B cell (primary cell): ENCODE measurements at regions of chr11 and their contacts with region 1.

Region 1: GRCh38 chr11:61071208-61071681 is 31.0 kb upstream of the CD5 start:
- DNase-seq: peak; percentile 61
- ATAC-seq: peak; percentile 50
- H3K4me3 ChIP-seq: peak overlapping the region in 1 of 5 experiments; percentile 15
- H3K4me3 Mint-ChIP-seq: peak overlapping the region; percentile 68
- H3K27ac ChIP-seq: peak overlapping the region; percentile 91 to 98
- H3K27ac Mint-ChIP-seq: peak overlapping the region; percentile 97
- H3K4me1 ChIP-seq: peaks cover 40 to 49% of the 10 kb centered on the region in 2 donors
- H3K4me1 Mint-ChIP-seq: peaks cover 71% of the 10 kb centered on the region
- H3K27me3 ChIP-seq: no peaks in the 10 kb centered on the region
- H3K27me3 Mint-ChIP-seq: no peaks in the 10 kb centered on the region
- CTCF ChIP-seq: no peak

Region 2: DNA sequence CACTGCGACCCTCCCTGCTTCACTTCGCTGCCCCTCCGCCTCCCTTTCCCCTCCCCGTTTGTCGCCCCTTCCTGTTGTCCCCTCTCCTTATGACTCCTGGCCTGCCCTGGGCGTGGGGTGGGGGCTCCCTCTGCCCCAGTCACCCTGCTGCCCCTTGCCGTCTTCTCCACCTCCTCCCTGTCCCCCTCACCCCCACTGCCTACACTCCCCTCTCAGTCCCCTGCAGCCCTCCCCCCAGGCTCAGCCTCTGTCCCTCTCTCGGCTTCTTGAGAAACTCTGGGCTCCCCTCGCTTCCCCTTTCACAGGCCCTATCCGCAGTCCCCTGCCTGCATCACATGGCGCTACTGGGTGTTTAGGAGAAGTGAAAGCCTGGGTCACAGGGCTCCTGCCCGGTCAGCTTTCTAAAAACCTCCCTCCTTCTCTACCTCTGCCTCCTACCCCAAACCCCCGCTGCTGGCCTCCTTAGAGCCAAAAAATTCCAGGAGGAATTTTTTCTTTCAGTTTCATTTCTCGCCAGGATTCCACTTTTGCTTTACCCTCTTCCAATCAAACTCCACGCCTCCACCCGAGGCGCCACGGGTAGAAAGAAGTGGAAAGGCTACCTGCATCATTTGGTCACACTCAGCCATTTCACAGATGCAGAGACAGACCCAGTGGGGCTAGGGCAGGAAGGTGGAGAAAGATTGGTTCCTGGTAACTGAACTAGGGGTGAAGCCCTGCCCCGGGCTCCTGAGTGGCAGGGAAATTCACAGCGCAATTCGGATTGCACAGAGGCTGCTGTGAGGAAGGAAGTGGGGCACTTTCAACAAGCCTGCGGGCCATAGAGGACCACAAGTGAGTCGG is 119.1 kb before region 1 on chr11 and contains the start of gene SLC15A3:
- CTCF ChIA-PET with region 1: interaction called, 3 read pairs
- POLR2A ChIA-PET with region 1: no interaction called
- intact Hi-C with region 1: loop called (anchors 1 kb)
- DNase-seq: peak; percentile 91
- ATAC-seq: peak; percentile 88
- H3K4me3 ChIP-seq: peak within 1 kb of the TSS; percentile 53 to 99 (median 81)
- H3K4me3 Mint-ChIP-seq: peak within 1 kb of the TSS; percentile 90
- H3K27ac ChIP-seq: peak within 1 kb of the TSS; percentile 91 to 98
- H3K27ac Mint-ChIP-seq: peak within 1 kb of the TSS; percentile 94
- H3K4me1 ChIP-seq: peaks cover 48 to 62% of the 10 kb centered on the region in 2 donors
- H3K4me1 Mint-ChIP-seq: peaks cover 55% of the 10 kb centered on the region
- H3K27me3 ChIP-seq: no peaks in the 10 kb centered on the region
- H3K27me3 Mint-ChIP-seq: no peaks in the 10 kb centered on the region
- CTCF ChIP-seq: no peak
- total RNA-seq, gene SLC15A3: 91.4 and 93.0 TPM in 2 replicates

Region 3: GRCh38 chr11:61007591-61008478 is 63.4 kb before region 1 on chr11:
- CTCF ChIA-PET with region 1: no interaction called
- POLR2A ChIA-PET with region 1: no interaction called
- intact Hi-C with region 1: no loop called
- DNase-seq: peak; percentile 47
- ATAC-seq: peak; percentile 69
- H3K4me3 ChIP-seq: peak overlapping the region in 3 of 5 experiments; percentile 35 to 44 (median 38)
- H3K4me3 Mint-ChIP-seq: peak overlapping the region; percentile 84
- H3K27ac ChIP-seq: no peak overlapping the region
- H3K27ac Mint-ChIP-seq: peak overlapping the region; percentile 15
- H3K4me1 ChIP-seq: peaks cover 25 to 27% of the 10 kb centered on the region in 2 donors
- H3K4me1 Mint-ChIP-seq: peaks cover 37% of the 10 kb centered on the region
- H3K27me3 ChIP-seq: peaks cover 0 to 18% (median 6%) of the 10 kb centered on the region in 4 experiments
- H3K27me3 Mint-ChIP-seq: peaks cover 11% of the 10 kb centered on the region
- CTCF ChIP-seq: no peak

Region 4: GRCh38 chr11:61041755-61042518 is 29.3 kb before region 1 on chr11:
- CTCF ChIA-PET with region 1: interaction called, 9 read pairs
- POLR2A ChIA-PET with region 1: interaction called, 13 read pairs
- intact Hi-C with region 1: loop called (anchors 1 kb)
- DNase-seq: peak; percentile 63
- ATAC-seq: peak; percentile 91
- H3K4me3 ChIP-seq: peak overlapping the region in 4 of 5 experiments; percentile 13 to 49 (median 34)
- H3K4me3 Mint-ChIP-seq: peak overlapping the region; percentile 88
- H3K27ac ChIP-seq: peak overlapping the region; percentile 84 to 87
- H3K27ac Mint-ChIP-seq: peak overlapping the region; percentile 95
- H3K4me1 ChIP-seq: peaks cover 15 to 17% of the 10 kb centered on the region in 2 donors
- H3K4me1 Mint-ChIP-seq: peaks cover 29% of the 10 kb centered on the region
- H3K27me3 ChIP-seq: no peaks in the 10 kb centered on the region
- H3K27me3 Mint-ChIP-seq: no peaks in the 10 kb centered on the region
- CTCF ChIP-seq: no peak

Region 5: GRCh38 chr11:61052182-61052972 is 18.9 kb before region 1 on chr11:
- CTCF ChIA-PET with region 1: no interaction called
- POLR2A ChIA-PET with region 1: no interaction called
- intact Hi-C with region 1: no loop called
- DNase-seq: no peak
- ATAC-seq: no peak
- H3K4me3 ChIP-seq: no peak overlapping the region
- H3K4me3 Mint-ChIP-seq: no peak overlapping the region
- H3K27ac ChIP-seq: no peak overlapping the region
- H3K27ac Mint-ChIP-seq: no peak overlapping the region
- H3K4me1 ChIP-seq: no peaks in the 10 kb centered on the region
- H3K4me1 Mint-ChIP-seq: peaks cover 4% of the 10 kb centered on the region
- H3K27me3 ChIP-seq: no peaks in the 10 kb centered on the region
- H3K27me3 Mint-ChIP-seq: no peaks in the 10 kb centered on the region
- CTCF ChIP-seq: no peak

Region 6: GRCh38 chr11:61102667-61103571 is 31.7 kb after region 1 on chr11:
- CTCF ChIA-PET with region 1: no interaction called
- POLR2A ChIA-PET with region 1: interaction called, 7 read pairs
- intact Hi-C with region 1: loop called (anchors 2 kb)
- DNase-seq: no peak
- ATAC-seq: no peak
- H3K4me3 ChIP-seq: peak overlapping the region; percentile 1 to 44 (median 16)
- H3K4me3 Mint-ChIP-seq: peak overlapping the region; percentile 64
- H3K27ac ChIP-seq: peak overlapping the region; percentile 49 to 66
- H3K27ac Mint-ChIP-seq: peak overlapping the region; percentile 70
- H3K4me1 ChIP-seq: peaks cover 46 to 55% of the 10 kb centered on the region in 2 donors
- H3K4me1 Mint-ChIP-seq: peaks cover 10% of the 10 kb centered on the region
- H3K27me3 ChIP-seq: no peaks in the 10 kb centered on the region
- H3K27me3 Mint-ChIP-seq: no peaks in the 10 kb centered on the region
- CTCF ChIP-seq: no peak

Region 7: DNA sequence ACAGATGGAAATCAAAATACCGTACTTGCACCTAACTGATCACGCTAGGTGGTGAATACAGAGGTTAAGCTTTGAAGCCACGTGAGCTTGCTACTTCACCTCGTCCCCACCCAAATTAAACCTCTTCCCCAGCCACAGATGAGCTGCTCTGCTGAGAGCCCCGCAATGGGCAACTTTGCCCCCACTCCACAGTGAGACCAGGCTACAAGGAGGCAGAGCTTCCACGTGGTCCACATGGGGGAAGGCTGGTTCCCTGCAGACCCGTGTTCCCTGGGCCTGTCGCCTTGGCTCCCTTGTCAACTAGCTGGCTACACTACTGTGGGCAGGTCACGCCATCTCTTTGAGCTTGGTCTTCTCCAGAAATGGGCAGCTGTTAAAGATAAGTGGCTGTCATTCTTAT is 42.0 kb after region 1 on chr11:
- CTCF ChIA-PET with region 1: no interaction called
- POLR2A ChIA-PET with region 1: no interaction called
- intact Hi-C with region 1: no loop called
- DNase-seq: no peak
- ATAC-seq: no peak
- H3K4me3 ChIP-seq: no peak overlapping the region
- H3K4me3 Mint-ChIP-seq: no peak overlapping the region
- H3K27ac ChIP-seq: no peak overlapping the region
- H3K27ac Mint-ChIP-seq: no peak overlapping the region
- H3K4me1 ChIP-seq: peaks cover 7% of the 10 kb centered on the region in 2 donors
- H3K4me1 Mint-ChIP-seq: peaks cover 18% of the 10 kb centered on the region
- H3K27me3 ChIP-seq: no peaks in the 10 kb centered on the region
- H3K27me3 Mint-ChIP-seq: no peaks in the 10 kb centered on the region
- CTCF ChIP-seq: no peak

Region 8: GRCh38 chr11:61141601-61142028 is 70.4 kb after region 1 on chr11:
- CTCF ChIA-PET with region 1: no interaction called
- POLR2A ChIA-PET with region 1: no interaction called
- intact Hi-C with region 1: no loop called
- DNase-seq: peak; percentile 41
- ATAC-seq: peak; percentile 21
- H3K4me3 ChIP-seq: no peak overlapping the region
- H3K4me3 Mint-ChIP-seq: no peak overlapping the region
- H3K27ac ChIP-seq: no peak overlapping the region
- H3K27ac Mint-ChIP-seq: no peak overlapping the region
- H3K4me1 ChIP-seq: peaks cover 3 to 23% of the 10 kb centered on the region in 2 donors
- H3K4me1 Mint-ChIP-seq: peaks cover 29% of the 10 kb centered on the region
- H3K27me3 ChIP-seq: no peaks in the 10 kb centered on the region
- H3K27me3 Mint-ChIP-seq: no peaks in the 10 kb centered on the region
- CTCF ChIP-seq: no peak

Region 9: DNA sequence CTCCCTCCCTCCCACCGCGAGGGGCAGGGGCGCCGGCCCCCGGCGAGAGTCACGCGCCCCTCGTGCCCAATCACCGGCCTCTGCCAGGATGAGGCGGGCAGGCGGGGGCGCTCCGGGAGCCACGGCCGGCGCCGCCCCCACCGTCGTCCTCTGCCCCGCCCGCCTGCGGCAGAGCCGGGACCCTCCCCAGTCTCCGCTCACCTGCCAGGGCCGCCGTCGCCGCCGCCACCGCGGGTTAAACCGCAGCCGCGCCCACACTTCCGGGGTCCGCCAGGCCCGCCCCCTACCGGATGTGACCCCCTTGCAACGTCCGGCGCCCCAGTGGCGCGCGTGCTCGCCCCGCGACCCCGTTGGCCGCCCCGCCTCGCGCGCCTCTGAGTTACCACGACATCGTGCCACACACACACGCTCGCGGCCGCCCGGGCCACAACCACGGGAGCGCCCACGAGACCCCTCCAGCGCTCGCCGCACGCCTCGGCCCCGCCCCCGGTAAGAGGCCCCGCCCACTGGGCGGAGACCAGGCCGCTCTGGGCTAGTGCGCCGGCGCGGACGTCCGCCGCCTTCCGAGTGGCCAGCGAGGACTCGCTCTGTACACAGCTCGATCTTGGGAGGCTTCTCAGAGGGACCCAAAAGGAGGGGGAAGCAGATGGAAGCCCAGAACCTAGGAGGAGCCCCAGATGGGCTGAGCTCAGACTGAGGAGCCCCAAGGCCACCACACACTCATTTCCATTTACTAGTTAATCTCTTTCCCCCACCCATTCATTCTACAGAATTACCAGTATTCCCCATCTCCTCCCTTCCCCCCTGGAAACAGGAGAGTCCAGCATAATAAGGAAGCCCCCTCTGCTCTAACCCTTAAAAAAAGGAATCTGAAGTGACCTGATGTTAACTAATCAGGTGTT is 90.2 kb after region 1 on chr11 and contains the start of gene VPS37C:
- CTCF ChIA-PET with region 1: no interaction called
- POLR2A ChIA-PET with region 1: no interaction called
- intact Hi-C with region 1: loop called (anchors 1 kb)
- DNase-seq: peak; percentile 98
- ATAC-seq: peak; percentile 75
- H3K4me3 ChIP-seq: peak within 1 kb of the TSS; percentile 32 to 68 (median 60)
- H3K4me3 Mint-ChIP-seq: peak within 1 kb of the TSS; percentile 91
- H3K27ac ChIP-seq: peak within 1 kb of the TSS; percentile 94 to 95
- H3K27ac Mint-ChIP-seq: peak within 1 kb of the TSS; percentile 96
- H3K4me1 ChIP-seq: peaks cover 42 to 50% of the 10 kb centered on the region in 2 donors
- H3K4me1 Mint-ChIP-seq: peaks cover 54% of the 10 kb centered on the region
- H3K27me3 ChIP-seq: no peaks in the 10 kb centered on the region
- H3K27me3 Mint-ChIP-seq: no peaks in the 10 kb centered on the region
- CTCF ChIP-seq: no peak
- total RNA-seq, gene VPS37C: 18.4 and 20.1 TPM in 2 replicates